Cardiac septum (tissue), 1 donor: ENCODE measurements at regions of chr1 and their contacts with region 1.

Region 1: DNA sequence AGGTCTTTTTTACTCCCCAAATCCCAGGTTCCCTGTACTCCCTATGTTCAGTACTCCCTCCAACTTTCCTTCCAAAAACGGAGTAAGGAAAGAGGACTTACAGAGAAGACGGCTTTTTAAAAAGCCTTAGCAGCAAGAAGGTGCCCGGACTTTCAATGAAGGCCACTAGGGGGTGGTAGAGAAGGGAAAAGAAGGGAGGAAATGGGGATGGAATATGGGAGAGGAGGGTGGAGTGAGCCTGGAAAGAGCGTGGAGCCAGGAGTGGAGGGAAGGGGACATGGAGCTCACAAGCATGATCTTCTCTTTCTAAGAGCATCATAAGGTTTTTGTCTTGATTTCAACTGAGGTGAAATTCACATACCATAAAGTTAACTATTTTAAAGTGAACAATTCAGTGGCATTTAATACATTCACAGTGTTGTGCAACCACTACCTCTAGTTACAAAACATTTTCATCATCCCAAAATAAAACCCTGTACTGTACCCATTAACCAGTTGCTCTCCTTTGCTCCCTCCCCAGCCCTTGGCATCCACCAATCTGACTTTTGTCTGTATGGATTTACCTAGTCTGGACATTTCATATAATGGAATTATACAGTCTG is 129.9 kb downstream of the ZNF281 start:
- DNase-seq: no peak

Region 2: GRCh38 chr1:199684686-199685273 is 595.1 kb before region 1 on chr1:
- intact Hi-C with region 1: loop called (anchors 10 kb)
- DNase-seq: no peak